B cell (primary cell): ENCODE measurements at regions of chr4 and their contacts with region 1.

Region 1: DNA sequence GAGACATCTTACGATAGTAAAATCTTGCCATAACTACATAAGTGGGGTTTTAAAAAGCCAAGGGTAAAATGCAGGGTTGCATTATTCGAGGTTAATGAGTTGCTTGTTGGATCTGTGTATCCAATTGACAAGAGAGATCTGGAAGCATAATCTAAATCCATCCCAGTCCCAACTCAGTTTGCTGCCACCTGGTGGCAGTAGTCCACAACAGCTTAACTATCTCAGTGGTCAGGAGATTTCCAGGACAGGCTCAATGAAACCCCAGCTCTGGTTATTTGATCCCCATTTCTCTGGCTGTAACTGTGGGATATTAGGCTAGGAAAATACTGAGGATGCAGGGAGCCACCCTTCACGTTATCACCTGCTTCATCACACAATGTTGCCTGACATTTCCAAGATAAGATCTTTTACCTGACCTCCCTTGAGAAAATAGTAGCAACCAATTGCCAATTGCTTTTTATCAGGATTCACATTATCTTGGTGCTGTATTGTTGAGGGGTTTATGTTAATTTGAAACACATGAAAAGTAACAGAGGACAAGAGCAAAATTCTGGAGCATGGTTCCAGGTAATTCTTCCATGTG is 88.2 kb upstream of the TNIP3 start:
- DNase-seq: peak; percentile 57
- ATAC-seq: peak; percentile 21
- H3K4me3 ChIP-seq: no peak overlapping the region
- H3K4me3 Mint-ChIP-seq: no peak overlapping the region
- H3K27ac ChIP-seq: no peak overlapping the region
- H3K27ac Mint-ChIP-seq: no peak overlapping the region
- H3K4me1 ChIP-seq: no peaks in the 10 kb centered on the region
- H3K4me1 Mint-ChIP-seq: no peaks in the 10 kb centered on the region
- H3K27me3 ChIP-seq: no peaks in the 10 kb centered on the region
- H3K27me3 Mint-ChIP-seq: no peaks in the 10 kb centered on the region
- CTCF ChIP-seq: peak; percentile 84

Region 2: GRCh38 chr4:121192480-121192879 is 59.8 kb before region 1 on chr4:
- CTCF ChIA-PET with region 1: interaction called, 28 read pairs
- POLR2A ChIA-PET with region 1: no interaction called
- intact Hi-C with region 1: loop called (anchors 1 kb)
- DNase-seq: peak; percentile 28
- ATAC-seq: no peak
- H3K4me3 ChIP-seq: no peak overlapping the region
- H3K4me3 Mint-ChIP-seq: no peak overlapping the region
- H3K27ac ChIP-seq: no peak overlapping the region
- H3K27ac Mint-ChIP-seq: no peak overlapping the region
- H3K4me1 ChIP-seq: no peaks in the 10 kb centered on the region
- H3K4me1 Mint-ChIP-seq: peaks cover 1% of the 10 kb centered on the region
- H3K27me3 ChIP-seq: no peaks in the 10 kb centered on the region
- H3K27me3 Mint-ChIP-seq: no peaks in the 10 kb centered on the region
- CTCF ChIP-seq: peak; percentile 86

Region 3: GRCh38 chr4:122131562-122132157 is 879.3 kb after region 1 on chr4:
- CTCF ChIA-PET with region 1: no interaction called
- POLR2A ChIA-PET with region 1: no interaction called
- intact Hi-C with region 1: no loop called
- DNase-seq: no peak
- ATAC-seq: no peak
- H3K4me3 ChIP-seq: no peak overlapping the region
- H3K4me3 Mint-ChIP-seq: no peak overlapping the region
- H3K27ac ChIP-seq: no peak overlapping the region
- H3K27ac Mint-ChIP-seq: no peak overlapping the region
- H3K4me1 ChIP-seq: no peaks in the 10 kb centered on the region
- H3K4me1 Mint-ChIP-seq: no peaks in the 10 kb centered on the region
- H3K27me3 ChIP-seq: peaks cover 0 to 4% (median 2%) of the 10 kb centered on the region in 4 experiments
- H3K27me3 Mint-ChIP-seq: peaks cover 13% of the 10 kb centered on the region
- CTCF ChIP-seq: no peak